ENCODE measurements at regions of chr9 and their contacts with region 1.

Region 1: GRCh38 chr9:103296189-103296588 is 301.1 kb downstream of the CYLC2 start:
- DNase-seq: no peak
- ATAC-seq: no peak
- H3K4me3 ChIP-seq: no peak overlapping the region
- H3K27ac ChIP-seq: no peak overlapping the region
- H3K4me1 ChIP-seq: no peaks in the 10 kb centered on the region
- H3K27me3 ChIP-seq: no peaks in the 10 kb centered on the region
- CTCF ChIP-seq: no peak

Region 2: DNA sequence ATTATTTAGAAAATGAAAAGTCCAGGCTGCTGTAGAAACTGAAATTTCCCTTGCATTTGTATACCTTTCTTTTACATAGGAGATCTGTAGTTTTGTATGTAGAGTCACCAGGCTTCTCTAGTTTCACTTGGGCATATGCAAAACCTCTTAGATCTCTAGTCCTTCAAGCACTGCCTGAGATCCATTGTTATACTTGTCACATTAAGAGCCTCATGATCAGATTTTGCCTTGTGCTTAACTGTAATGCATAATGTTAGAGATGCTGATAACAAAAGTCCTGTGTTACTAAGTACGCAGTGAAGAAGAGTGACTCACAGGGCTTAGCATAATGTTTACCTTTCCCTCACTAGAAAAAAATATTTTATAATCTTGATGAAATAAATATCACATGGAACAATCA is 50.8 kb before region 1 on chr9:
- intact Hi-C with region 1: no loop called
- DNase-seq: no peak
- ATAC-seq: no peak
- H3K4me3 ChIP-seq: no peak overlapping the region
- H3K27ac ChIP-seq: no peak overlapping the region
- H3K4me1 ChIP-seq: no peaks in the 10 kb centered on the region
- H3K27me3 ChIP-seq: no peaks in the 10 kb centered on the region
- CTCF ChIP-seq: no peak

Region 3: DNA sequence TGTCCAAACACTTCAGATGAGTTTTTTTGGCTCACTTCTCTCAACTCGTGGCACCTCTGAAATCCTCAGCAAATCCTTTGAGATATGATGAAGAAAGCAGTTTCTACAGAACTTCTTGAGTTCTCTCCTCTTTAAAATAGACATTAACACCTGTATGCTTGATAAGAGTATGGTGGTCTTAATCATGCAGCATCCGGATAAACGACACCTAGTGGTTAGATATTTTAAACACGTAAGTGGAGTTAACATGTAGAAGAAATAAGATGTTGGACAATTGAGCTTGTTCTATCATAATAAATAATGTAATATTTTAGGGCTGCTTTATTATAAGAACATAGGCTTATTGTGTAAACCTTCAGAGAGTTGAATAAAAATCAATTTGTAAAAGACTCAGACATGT is 23.8 kb after region 1 on chr9:
- intact Hi-C with region 1: loop called in 1 of 10 experiments (anchors 2 kb)
- DNase-seq: no peak
- ATAC-seq: no peak
- H3K4me3 ChIP-seq: no peak overlapping the region
- H3K27ac ChIP-seq: no peak overlapping the region
- H3K4me1 ChIP-seq: no peaks in the 10 kb centered on the region
- H3K27me3 ChIP-seq: no peaks in the 10 kb centered on the region
- CTCF ChIP-seq: peak in 1 of 9 donors; percentile 11